ENCODE measurements at regions of chr2 and their contacts with region 1.

Region 1: GRCh38 chr2:42102024-42102590 is 54.3 kb downstream of the PKDCC start:
- DNase-seq: peak; percentile 92
- H3K4me3 Mint-ChIP-seq: peak overlapping the region; percentile 73
- H3K27ac Mint-ChIP-seq: peak overlapping the region; percentile 94
- H3K4me1 Mint-ChIP-seq: peaks cover 45% of the 10 kb centered on the region
- H3K27me3 Mint-ChIP-seq: no peaks in the 10 kb centered on the region

Region 2: GRCh38 chr2:41907771-41908207 is 194.3 kb before region 1 on chr2:
- intact Hi-C with region 1: no loop called
- DNase-seq: no peak
- H3K4me3 Mint-ChIP-seq: no peak overlapping the region
- H3K27ac Mint-ChIP-seq: no peak overlapping the region
- H3K4me1 Mint-ChIP-seq: no peaks in the 10 kb centered on the region
- H3K27me3 Mint-ChIP-seq: peaks cover 12% of the 10 kb centered on the region

Region 3: DNA sequence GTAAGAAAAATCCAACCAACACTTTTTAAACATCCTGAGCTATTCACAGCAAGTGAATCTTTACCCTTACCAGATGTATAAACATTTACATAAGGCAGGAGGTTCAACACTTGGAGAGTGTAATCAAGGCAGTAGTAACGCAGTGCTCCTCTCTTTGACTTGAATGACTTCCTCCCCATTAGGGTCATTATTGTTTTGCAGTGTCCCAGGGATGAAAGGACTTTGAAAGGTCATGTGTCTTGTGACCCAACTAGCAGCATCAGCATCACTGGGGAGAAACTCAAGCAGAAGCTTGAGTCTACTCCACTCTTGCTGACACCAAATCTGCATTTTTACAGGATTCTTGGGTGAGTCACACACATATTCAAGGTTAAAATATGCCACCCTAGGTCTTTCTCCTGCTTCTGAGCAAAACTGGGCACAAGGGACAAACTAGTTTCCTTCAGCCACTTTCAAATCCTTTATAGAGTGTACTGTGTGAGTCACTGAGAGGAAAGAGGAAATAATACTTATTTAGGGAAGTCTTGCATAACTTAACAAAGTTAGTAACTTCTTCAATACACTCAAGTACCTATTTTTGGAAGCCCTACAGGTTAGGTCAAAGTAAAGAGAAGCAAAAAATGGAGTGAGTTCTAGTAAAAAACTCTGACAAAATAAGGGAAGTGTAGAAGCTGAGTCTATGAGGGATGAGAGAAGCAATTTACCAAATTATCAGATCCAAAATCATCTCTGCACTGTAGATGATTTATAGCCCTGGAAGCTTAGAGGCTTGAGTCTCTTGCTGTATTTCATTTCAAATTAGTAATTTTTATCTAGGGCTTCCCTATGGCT is 16.0 kb after region 1 on chr2:
- intact Hi-C with region 1: loop called (anchors 1 kb)
- DNase-seq: no peak
- H3K4me3 Mint-ChIP-seq: no peak overlapping the region
- H3K27ac Mint-ChIP-seq: no peak overlapping the region
- H3K4me1 Mint-ChIP-seq: peaks cover 40% of the 10 kb centered on the region
- H3K27me3 Mint-ChIP-seq: no peaks in the 10 kb centered on the region

Region 4: DNA sequence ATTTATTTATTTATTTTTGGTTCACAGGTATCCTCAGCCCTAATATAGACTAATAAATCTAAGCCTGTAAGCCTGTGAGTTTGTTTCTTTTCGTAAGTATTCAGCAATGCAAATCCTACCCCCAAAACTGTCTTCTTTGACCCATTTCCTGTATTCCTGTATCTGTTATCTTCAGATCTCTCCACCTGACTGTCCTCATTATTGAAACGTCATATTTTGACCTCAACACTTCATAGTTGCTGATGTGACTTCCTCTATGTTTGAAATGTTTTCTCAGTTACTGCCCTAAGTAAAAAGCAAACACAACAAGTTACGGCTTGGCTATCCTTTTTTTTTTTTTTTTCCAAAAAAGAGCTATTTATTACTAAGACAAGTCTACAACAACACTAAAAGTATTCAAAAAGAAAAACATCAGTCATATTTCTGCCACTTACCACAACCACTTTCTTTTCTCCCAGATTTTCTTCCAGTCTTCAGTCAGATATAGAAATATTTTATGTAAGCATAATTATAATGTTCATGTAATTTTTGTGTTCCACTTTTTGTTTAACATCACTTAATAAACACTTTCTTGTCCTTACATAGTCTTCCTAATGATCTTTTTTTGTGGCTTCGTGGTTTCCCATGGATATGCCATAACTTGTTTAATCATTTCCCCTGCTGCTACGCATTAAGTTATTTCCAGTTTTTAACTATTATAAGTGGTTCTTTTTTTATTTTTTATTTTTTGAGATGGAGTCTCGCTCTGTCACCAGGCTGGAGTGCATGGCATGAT is 22.1 kb after region 1 on chr2:
- intact Hi-C with region 1: loop called (anchors 1 kb)
- DNase-seq: no peak
- H3K4me3 Mint-ChIP-seq: peak overlapping the region; percentile 50
- H3K27ac Mint-ChIP-seq: peak overlapping the region; percentile 89
- H3K4me1 Mint-ChIP-seq: peaks cover 61% of the 10 kb centered on the region
- H3K27me3 Mint-ChIP-seq: no peaks in the 10 kb centered on the region

Region 5: GRCh38 chr2:42132966-42133641 is 31.0 kb after region 1 on chr2:
- intact Hi-C with region 1: loop called (anchors 1 kb)
- DNase-seq: peak; percentile 87
- H3K4me3 Mint-ChIP-seq: peak overlapping the region; percentile 67
- H3K27ac Mint-ChIP-seq: peak overlapping the region; percentile 95
- H3K4me1 Mint-ChIP-seq: peaks cover 90% of the 10 kb centered on the region
- H3K27me3 Mint-ChIP-seq: no peaks in the 10 kb centered on the region